ENCODE measurements at regions of chr5 and their contacts with region 1.

Region 1: DNA sequence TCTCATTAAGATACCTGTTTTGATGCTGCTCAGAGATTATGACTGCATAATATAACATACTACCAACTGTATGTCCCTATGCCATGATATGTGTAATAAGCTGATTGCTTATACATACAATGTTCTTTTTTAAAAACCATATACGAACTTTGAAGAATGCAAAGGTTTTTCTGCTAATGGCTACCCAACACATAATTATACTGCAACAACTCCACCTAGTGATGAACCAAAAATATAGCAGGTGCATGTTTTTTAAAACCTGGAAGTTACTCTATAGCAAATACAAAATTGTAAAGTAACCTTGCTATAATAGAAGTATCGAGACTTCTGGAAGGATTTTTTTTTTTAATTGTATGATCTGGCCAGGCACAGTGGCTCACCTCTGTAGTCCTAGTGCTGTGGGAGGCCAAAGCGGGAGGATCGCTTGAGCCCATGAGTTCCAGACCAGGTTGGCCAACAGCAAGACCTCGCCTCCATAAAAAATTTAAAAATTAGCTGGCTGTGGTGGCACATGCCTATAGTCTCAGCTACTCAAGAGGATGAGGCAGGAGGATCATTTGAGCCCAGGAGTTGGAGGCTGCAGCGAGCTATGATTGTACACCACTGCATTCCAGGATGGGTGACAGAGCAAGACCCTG is 49.1 kb downstream of the HOMER1 start:
- DNase-seq: no peak
- ATAC-seq: peak; percentile 76
- H3K4me3 ChIP-seq: no peak overlapping the region
- H3K27ac ChIP-seq: no peak overlapping the region
- H3K4me1 ChIP-seq: no peaks in the 10 kb centered on the region
- H3K27me3 ChIP-seq: no peaks in the 10 kb centered on the region
- CTCF ChIP-seq: peak; percentile 69

Region 2: GRCh38 chr5:79255786-79256557 is 208.8 kb before region 1 on chr5:
- CTCF ChIA-PET with region 1: interaction called, 3 read pairs
- POLR2A ChIA-PET with region 1: no interaction called
- in situ Hi-C with region 1: no loop called
- intact Hi-C with region 1: loop called (anchors 5 kb)
- DNase-seq: no peak
- ATAC-seq: peak; percentile 90
- H3K4me3 ChIP-seq: no peak overlapping the region
- H3K27ac ChIP-seq: no peak overlapping the region
- H3K4me1 ChIP-seq: no peaks in the 10 kb centered on the region
- H3K27me3 ChIP-seq: no peaks in the 10 kb centered on the region
- CTCF ChIP-seq: peak; percentile 83

Region 3: GRCh38 chr5:79401216-79401615 is 63.6 kb before region 1 on chr5:
- CTCF ChIA-PET with region 1: interaction called, 12 read pairs
- POLR2A ChIA-PET with region 1: no interaction called
- in situ Hi-C with region 1: no loop called
- intact Hi-C with region 1: no loop called
- DNase-seq: no peak
- ATAC-seq: no peak
- H3K4me3 ChIP-seq: no peak overlapping the region
- H3K27ac ChIP-seq: no peak overlapping the region
- H3K4me1 ChIP-seq: no peaks in the 10 kb centered on the region
- H3K27me3 ChIP-seq: no peaks in the 10 kb centered on the region
- CTCF ChIP-seq: no peak

Region 4: GRCh38 chr5:79495319-79495718 is 30.5 kb after region 1 on chr5:
- CTCF ChIA-PET with region 1: no interaction called
- POLR2A ChIA-PET with region 1: no interaction called
- in situ Hi-C with region 1: no loop called
- intact Hi-C with region 1: no loop called
- DNase-seq: no peak
- ATAC-seq: peak; percentile 60
- H3K4me3 ChIP-seq: no peak overlapping the region
- H3K27ac ChIP-seq: no peak overlapping the region
- H3K4me1 ChIP-seq: peaks cover 11% of the 10 kb centered on the region; the same call in 1 of the 2 replicates
- H3K27me3 ChIP-seq: no peaks in the 10 kb centered on the region
- CTCF ChIP-seq: no peak